ENCODE measurements at regions of chr10 and their contacts with region 1.

Region 1: GRCh38 chr10:51074238-51075028 is at the start of gene PRKG1:
- DNase-seq: peak; percentile 87 to 93 (median 89)
- ATAC-seq: peak; percentile 95 to 97
- H3K4me3 ChIP-seq: peak within 1 kb of the TSS; percentile 76
- H3K27ac ChIP-seq: peak within 1 kb of the TSS; percentile 6
- H3K4me1 ChIP-seq: peaks cover 1% of the 10 kb centered on the region
- H3K27me3 ChIP-seq: no peaks in the 10 kb centered on the region
- total RNA-seq, gene PRKG1: 45.5 to 49.9 (median 48.0) TPM

Region 2: GRCh38 chr10:50809596-50809995 is 264.8 kb before region 1 on chr10:
- intact Hi-C with region 1: no loop called
- DNase-seq: no peak
- ATAC-seq: no peak
- H3K4me3 ChIP-seq: no peak overlapping the region
- H3K27ac ChIP-seq: no peak overlapping the region
- H3K4me1 ChIP-seq: no peaks in the 10 kb centered on the region
- H3K27me3 ChIP-seq: no peaks in the 10 kb centered on the region

Region 3: GRCh38 chr10:51422311-51423120 is 348.1 kb after region 1 on chr10:
- intact Hi-C with region 1: loop called in 3 of 4 experiments (anchors 10 kb)
- DNase-seq: peak; percentile 40 to 66 (median 50)
- ATAC-seq: peak; percentile 61 to 74
- H3K4me3 ChIP-seq: no peak overlapping the region
- H3K27ac ChIP-seq: peak overlapping the region; percentile 84
- H3K4me1 ChIP-seq: peaks cover 8% of the 10 kb centered on the region
- H3K27me3 ChIP-seq: no peaks in the 10 kb centered on the region

Measured in right cardiac atrium (tissue), 5 donors.